Activated CD4-positive, alpha-beta memory T cell treated with anti-CD3 and anti-CD28 coated beads, Interleukin-2, amount 10 ng/mL, durations not matched to agents 7 days and 5 days (primary cell): ENCODE measurements at regions of chr2 and their contacts with region 1.

Region 1: DNA sequence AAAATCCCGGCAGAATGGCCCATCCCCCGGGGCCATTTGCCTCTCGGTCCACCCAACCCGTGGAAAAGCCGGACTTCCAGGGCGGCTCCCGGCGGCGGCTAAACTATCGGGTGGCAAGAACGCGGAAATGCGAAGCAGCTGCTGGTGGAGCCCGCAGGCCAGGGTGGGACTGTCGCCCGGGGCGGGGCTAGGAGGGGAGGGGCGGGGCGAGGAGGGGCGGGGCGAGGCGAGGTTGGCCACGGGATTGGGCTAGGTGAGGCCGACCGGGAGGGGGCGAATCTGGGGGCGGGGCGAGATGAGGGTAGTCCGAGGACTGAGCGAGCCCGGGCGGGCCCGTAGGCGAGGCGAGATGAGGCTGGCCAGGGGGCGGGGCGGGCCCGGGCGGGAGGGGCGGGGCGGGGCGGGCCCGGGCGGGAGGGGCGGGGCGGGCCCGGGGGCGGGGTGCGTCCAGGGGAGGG is 315 bp upstream of the SLC66A3 start:
- DNase-seq: peak; percentile 98
- H3K4me3 Mint-ChIP-seq: peak overlapping the region; percentile 74
- H3K27ac Mint-ChIP-seq: peak overlapping the region; percentile 80
- H3K4me1 Mint-ChIP-seq: peaks cover 21% of the 10 kb centered on the region
- H3K27me3 Mint-ChIP-seq: peaks cover 14% of the 10 kb centered on the region

Region 2: GRCh38 chr2:11028406-11028916 is 126.5 kb before region 1 on chr2:
- CTCF ChIA-PET with region 1: no interaction called
- POLR2A ChIA-PET with region 1: no interaction called
- DNase-seq: no peak
- H3K4me3 Mint-ChIP-seq: no peak overlapping the region
- H3K27ac Mint-ChIP-seq: no peak overlapping the region
- H3K4me1 Mint-ChIP-seq: no peaks in the 10 kb centered on the region
- H3K27me3 Mint-ChIP-seq: peaks cover 13% of the 10 kb centered on the region

Region 3: DNA sequence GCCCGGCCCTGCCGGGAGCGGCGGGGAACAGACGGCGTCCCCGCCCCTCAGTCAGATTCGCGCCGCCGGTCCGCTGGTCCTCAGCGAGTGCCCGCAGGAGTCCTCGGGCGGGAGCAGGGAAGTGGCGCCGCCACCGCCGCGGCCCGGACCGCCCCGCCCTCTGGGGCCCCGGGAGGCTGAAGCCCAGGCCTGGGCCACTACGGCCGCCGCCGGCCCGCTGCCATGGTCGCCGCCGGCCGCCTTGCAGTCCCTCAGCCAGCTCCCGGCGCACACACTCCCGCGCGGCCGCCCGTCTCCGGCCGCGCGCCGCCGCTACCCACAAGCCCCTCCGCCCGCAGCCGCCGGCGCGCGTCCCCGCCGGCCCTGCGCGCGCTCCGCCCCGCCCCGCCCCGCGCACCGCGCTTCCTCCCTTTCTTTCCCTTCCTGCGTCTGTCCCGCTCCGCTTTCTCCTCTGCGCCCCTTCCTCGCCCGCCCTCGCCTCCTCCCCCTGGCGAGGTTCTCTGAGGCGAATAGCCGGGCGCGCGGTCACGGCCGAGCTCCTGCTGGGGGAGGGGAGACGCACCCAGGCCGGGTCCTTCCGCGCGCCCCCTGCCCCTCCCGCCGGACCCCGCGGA is 189.5 kb after region 1 on chr2 and contains the start of gene ROCK2:
- CTCF ChIA-PET with region 1: no interaction called
- POLR2A ChIA-PET with region 1: interaction called, 25 read pairs
- DNase-seq: peak; percentile 75
- H3K4me3 Mint-ChIP-seq: peak within 1 kb of the TSS; percentile 98
- H3K27ac Mint-ChIP-seq: peak within 1 kb of the TSS; percentile 87
- H3K4me1 Mint-ChIP-seq: peaks cover 26% of the 10 kb centered on the region
- H3K27me3 Mint-ChIP-seq: peaks cover 13% of the 10 kb centered on the region
- total RNA-seq, gene ROCK2: 21.3 to 22.6 TPM